Ovary (tissue), 10 donors: ENCODE measurements at regions of chr4 and their contacts with region 1.

Region 1: DNA sequence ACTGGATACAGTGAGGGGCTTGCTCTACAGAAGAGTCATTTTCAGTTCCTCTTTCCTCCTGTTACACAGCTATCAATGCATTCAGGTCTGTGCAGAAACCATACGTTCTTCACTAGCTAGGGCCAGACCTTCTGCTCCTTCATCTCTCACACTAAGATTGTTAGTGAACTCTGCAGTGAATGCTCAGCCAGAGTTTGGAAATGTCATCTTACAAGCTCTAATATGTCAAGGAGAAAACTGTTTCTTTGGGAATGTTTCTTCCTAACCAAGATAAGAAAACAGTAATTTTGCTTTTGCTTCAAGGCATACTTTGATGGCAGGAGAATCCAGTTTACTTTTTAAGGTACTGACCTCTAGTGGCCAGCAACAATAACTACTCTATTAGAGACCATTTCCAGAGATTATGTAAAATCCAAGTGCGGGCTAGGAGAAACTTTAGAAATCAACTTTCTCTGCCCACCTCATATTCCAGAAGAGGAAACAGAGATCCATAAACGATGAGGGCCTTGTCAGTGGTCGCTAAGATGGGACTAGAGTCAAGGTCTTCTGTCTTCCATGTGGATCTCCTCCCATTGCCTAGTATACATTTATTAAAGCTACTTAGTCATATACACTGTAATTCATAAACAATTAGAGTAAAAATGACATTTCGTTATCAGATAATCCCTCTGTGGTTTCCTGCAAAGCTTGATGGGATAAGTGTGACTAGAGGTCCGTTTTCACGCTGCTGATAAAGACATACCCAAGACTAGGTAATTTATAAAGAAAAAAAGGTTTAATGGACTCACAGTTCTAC is 12.1 kb upstream of the CC2D2A start:
- DNase-seq: no peak
- H3K4me3 ChIP-seq: no peak overlapping the region
- H3K27ac ChIP-seq: peak overlapping the region in 1 of 2 donors; percentile 2
- H3K4me1 ChIP-seq: peaks cover 5% of the 10 kb centered on the region
- H3K27me3 ChIP-seq: no peaks in the 10 kb centered on the region
- CTCF ChIP-seq: peak; percentile 56 to 81 (median 74)
- EP300 ChIP-seq: peak; percentile 24
- POLR2A ChIP-seq: no peak

Region 2: DNA sequence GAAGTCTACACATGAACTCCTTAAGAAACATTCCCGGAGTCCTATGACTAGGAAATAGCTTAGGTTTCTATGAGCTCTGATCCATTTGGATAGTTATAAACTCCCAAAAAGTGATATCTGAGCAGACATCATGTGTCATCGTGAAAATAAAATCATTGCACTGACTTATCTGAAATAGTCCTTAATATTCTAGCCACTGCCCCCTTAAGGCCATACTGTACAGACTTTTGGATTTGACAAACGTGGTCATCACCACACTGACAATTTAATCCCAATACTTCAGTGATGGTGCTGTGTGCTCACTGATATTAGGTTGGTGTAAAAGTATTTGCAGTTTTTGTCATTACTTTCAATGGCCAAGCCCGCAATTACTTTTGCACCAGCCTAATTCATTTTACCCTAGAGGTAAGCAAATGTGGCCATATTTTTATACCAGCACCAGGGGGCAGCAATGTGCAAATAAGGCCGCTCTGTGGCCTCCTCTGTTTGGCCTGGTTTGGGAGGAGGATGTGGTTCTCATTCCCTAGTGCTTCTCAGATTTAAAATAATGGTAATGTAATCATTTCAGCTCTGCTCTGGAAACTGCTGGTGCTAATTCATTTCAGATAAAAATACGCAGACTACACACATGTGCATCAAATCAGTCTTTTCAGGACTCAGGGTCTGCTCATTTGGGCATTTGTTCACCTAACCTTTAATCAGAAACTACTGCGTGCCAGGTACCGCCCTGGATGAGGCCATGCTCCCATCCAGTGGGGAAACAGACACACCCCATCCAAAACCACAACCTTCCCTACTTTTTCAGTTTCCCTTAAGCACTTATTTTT is 226.1 kb before region 1 on chr4:
- intact Hi-C with region 1: loop called in 3 of 4 experiments (anchors 5 kb)
- DNase-seq: peak; percentile 76 to 92 (median 81)
- H3K4me3 ChIP-seq: no peak overlapping the region
- H3K27ac ChIP-seq: no peak overlapping the region
- H3K4me1 ChIP-seq: peaks cover 5% of the 10 kb centered on the region
- H3K27me3 ChIP-seq: no peaks in the 10 kb centered on the region
- CTCF ChIP-seq: peak; percentile 20 to 85 (median 78)
- EP300 ChIP-seq: no peak
- POLR2A ChIP-seq: no peak

Region 3: DNA sequence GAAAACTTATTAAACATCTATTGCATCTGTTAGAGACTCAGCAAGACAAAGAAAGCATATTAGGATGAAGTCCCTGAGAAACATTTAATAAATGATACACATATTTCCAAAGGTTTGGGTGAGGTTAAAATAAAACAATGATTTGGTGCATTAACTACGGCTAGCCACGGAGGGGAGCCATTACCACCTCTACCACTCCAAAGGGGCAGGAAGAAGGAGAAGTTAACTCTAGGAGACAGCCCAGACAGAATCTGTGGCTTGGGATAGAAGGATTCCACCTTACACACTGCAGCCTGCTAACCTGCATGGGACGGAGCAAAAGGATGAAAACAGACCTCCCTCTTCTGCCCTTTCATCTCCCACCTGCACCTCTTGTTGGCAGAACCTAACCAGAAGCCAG is 218.9 kb before region 1 on chr4:
- intact Hi-C with region 1: loop called (anchors 2 to 5 kb)
- DNase-seq: peak in 4 of 5 donors; percentile 38 to 47 (median 42)
- H3K4me3 ChIP-seq: no peak overlapping the region
- H3K27ac ChIP-seq: no peak overlapping the region
- H3K4me1 ChIP-seq: no peaks in the 10 kb centered on the region
- H3K27me3 ChIP-seq: no peaks in the 10 kb centered on the region
- CTCF ChIP-seq: peak in 2 of 3 donors; percentile 44 to 56
- EP300 ChIP-seq: no peak
- POLR2A ChIP-seq: no peak

Region 4: GRCh38 chr4:15396157-15396800 is 61.3 kb before region 1 on chr4:
- intact Hi-C with region 1: no loop called
- DNase-seq: no peak
- H3K4me3 ChIP-seq: no peak overlapping the region
- H3K27ac ChIP-seq: no peak overlapping the region
- H3K4me1 ChIP-seq: peaks cover 12% of the 10 kb centered on the region
- H3K27me3 ChIP-seq: no peaks in the 10 kb centered on the region
- CTCF ChIP-seq: peak in 1 of 3 donors; percentile 14
- EP300 ChIP-seq: no peak
- POLR2A ChIP-seq: no peak

Region 5: DNA sequence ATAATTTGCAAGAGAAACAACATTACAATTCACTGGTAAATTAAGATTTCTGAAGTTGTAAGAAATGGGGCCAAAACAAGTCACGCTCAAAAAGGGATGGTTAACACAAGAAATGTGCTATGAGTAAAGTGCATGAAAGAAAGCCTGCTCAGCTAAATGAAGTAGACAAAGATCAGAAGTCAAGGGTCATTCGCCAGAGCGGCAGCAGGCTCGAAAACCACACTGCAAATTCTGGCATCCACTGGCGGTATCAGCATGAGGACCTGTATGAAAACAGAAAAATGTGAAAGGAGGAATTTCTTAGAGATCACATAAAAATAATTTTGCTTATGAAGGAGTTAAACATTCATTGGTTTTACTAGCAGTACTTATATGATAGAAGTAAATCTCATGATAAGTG is 147.9 kb after region 1 on chr4:
- intact Hi-C with region 1: no loop called
- DNase-seq: no peak
- H3K4me3 ChIP-seq: no peak overlapping the region
- H3K27ac ChIP-seq: no peak overlapping the region
- H3K4me1 ChIP-seq: no peaks in the 10 kb centered on the region
- H3K27me3 ChIP-seq: no peaks in the 10 kb centered on the region
- CTCF ChIP-seq: no peak
- EP300 ChIP-seq: no peak
- POLR2A ChIP-seq: no peak

Region 6: DNA sequence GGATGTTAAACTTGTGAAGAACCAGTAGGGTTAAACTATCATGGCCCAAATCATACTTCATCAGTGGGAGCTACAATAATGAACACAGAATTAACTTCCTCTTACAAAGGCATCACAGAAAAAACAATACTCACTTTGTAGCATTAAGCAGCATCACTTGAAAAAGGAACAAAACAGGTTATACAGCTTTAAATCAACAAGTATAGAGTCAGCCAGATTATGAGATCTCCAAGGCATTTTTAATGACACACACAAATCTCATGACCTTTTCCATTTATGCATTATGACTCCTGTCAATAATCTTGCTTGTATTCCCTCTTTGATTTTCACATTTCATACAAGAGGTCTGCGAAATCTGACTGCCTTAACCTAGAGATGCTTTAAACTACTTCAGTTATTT is 179.2 kb after region 1 on chr4:
- intact Hi-C with region 1: no loop called
- DNase-seq: no peak
- H3K4me3 ChIP-seq: no peak overlapping the region
- H3K27ac ChIP-seq: no peak overlapping the region
- H3K4me1 ChIP-seq: no peaks in the 10 kb centered on the region
- H3K27me3 ChIP-seq: no peaks in the 10 kb centered on the region
- CTCF ChIP-seq: no peak
- EP300 ChIP-seq: no peak
- POLR2A ChIP-seq: no peak